MCF 10A (cell line): ENCODE measurements at regions of chr18 and their contacts with region 1.

Region 1: GRCh38 chr18:62425465-62426195 is 97.2 kb upstream of the ZCCHC2 start:
- DNase-seq: peak; percentile 97
- H3K4me3 Mint-ChIP-seq: peak overlapping the region; percentile 65
- H3K27ac Mint-ChIP-seq: peak overlapping the region; percentile 90
- H3K4me1 Mint-ChIP-seq: peaks cover 21% of the 10 kb centered on the region
- H3K27me3 Mint-ChIP-seq: no peaks in the 10 kb centered on the region
- CTCF ChIP-seq: peak; percentile 91

Region 2: DNA sequence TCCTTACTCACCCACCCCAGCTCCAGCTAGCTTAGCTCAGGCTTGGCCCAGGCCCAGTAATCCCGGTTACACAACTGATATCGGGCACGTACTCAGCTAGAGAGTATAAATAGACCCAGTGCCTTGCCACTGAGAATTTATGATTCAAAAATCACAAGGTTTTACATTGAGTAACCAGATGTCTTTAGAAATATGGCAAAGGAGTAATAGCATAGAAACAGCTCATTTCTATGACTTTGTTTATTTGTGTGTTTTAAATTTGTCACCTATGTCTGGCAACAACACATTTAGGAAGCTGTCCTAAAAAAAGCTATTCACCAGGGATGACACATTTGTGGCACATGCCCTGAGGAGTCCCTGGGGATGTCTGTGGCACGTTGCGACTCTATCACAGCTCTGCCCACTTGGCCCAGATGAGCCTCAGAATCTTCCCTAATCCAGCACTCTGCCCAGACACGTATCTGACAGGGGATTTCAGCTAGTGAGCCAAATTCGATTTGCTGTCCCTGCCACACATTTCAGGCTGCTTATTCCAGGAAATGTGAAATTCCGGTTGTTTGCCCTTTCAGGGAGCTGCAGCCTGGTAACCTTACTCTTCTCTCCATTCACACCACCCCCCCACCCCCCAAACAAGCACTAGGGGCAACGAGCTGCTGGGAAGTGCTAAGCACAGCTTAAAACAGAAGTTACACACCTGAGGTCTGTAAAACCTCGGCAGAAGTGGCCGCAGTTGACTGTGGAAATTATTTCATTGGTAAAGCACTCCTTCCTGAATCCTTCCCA is 11.8 kb after region 1 on chr18:
- CTCF ChIA-PET with region 1: interaction called, 8 read pairs
- POLR2A ChIA-PET with region 1: interaction called, 50 read pairs
- intact Hi-C with region 1: loop called (anchors 1 kb)
- DNase-seq: peak; percentile 95
- H3K4me3 Mint-ChIP-seq: peak overlapping the region; percentile 55
- H3K27ac Mint-ChIP-seq: peak overlapping the region; percentile 93
- H3K4me1 Mint-ChIP-seq: peaks cover 18% of the 10 kb centered on the region
- H3K27me3 Mint-ChIP-seq: no peaks in the 10 kb centered on the region
- CTCF ChIP-seq: no peak

Region 3: GRCh38 chr18:62450546-62451406 is 25.1 kb after region 1 on chr18:
- CTCF ChIA-PET with region 1: interaction called, 11 read pairs
- POLR2A ChIA-PET with region 1: interaction called, 9 read pairs
- intact Hi-C with region 1: no loop called
- DNase-seq: peak; percentile 91
- H3K4me3 Mint-ChIP-seq: peak overlapping the region; percentile 30
- H3K27ac Mint-ChIP-seq: peak overlapping the region; percentile 67
- H3K4me1 Mint-ChIP-seq: peaks cover 29% of the 10 kb centered on the region
- H3K27me3 Mint-ChIP-seq: no peaks in the 10 kb centered on the region
- CTCF ChIP-seq: no peak

Region 4: GRCh38 chr18:62505669-62506494 is 80.3 kb after region 1 on chr18:
- CTCF ChIA-PET with region 1: interaction called, 14 read pairs
- POLR2A ChIA-PET with region 1: interaction called, 4 read pairs
- intact Hi-C with region 1: loop called (anchors 1 kb)
- DNase-seq: peak; percentile 30
- H3K4me3 Mint-ChIP-seq: peak overlapping the region; percentile 75
- H3K27ac Mint-ChIP-seq: peak overlapping the region; percentile 77
- H3K4me1 Mint-ChIP-seq: no peaks in the 10 kb centered on the region
- H3K27me3 Mint-ChIP-seq: no peaks in the 10 kb centered on the region
- CTCF ChIP-seq: no peak

Region 5: DNA sequence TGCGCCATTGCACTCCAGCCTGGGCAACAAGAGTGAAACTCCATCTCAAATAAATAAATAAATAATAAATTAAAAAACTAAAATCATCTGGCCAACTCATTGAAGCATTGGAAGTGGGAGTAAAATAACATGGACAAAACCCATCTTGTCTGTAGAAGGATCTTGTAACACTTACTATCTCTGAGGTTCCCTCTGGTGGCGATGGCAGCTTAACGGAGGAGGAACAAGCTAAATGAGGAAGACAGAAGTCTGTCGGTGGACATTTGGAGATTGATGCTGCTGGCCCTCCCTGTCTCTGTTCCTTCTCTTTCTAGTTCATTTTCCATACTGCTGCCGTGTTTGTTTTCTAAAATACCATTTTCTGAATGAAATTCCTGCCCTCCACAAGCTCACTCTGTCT is 140.6 kb after region 1 on chr18:
- CTCF ChIA-PET with region 1: interaction called, 5 read pairs
- POLR2A ChIA-PET with region 1: interaction called, 6 read pairs
- intact Hi-C with region 1: loop called (anchors 1 kb)
- DNase-seq: peak; percentile 32
- H3K4me3 Mint-ChIP-seq: no peak overlapping the region
- H3K27ac Mint-ChIP-seq: no peak overlapping the region
- H3K4me1 Mint-ChIP-seq: no peaks in the 10 kb centered on the region
- H3K27me3 Mint-ChIP-seq: no peaks in the 10 kb centered on the region
- CTCF ChIP-seq: peak; percentile 7